Ascending aorta (tissue), 2 donors: ENCODE measurements at regions of chr6 and their contacts with region 1.

Region 1: GRCh38 chr6:169035385-169036240 is 218.0 kb downstream of the THBS2 start:
- DNase-seq: no peak
- H3K4me3 ChIP-seq: peak overlapping the region in 1 of 2 donors; percentile 52
- H3K27ac ChIP-seq: peak overlapping the region; percentile 53 to 76
- H3K4me1 ChIP-seq: peaks cover 0 to under 1% of the 10 kb centered on the region in 2 donors
- H3K27me3 ChIP-seq: no peaks in the 10 kb centered on the region
- CTCF ChIP-seq: no peak

Region 2: GRCh38 chr6:168884646-168885086 is 150.9 kb before region 1 on chr6:
- intact Hi-C with region 1: no loop called
- DNase-seq: peak in 1 of 2 donors; percentile 84
- H3K4me3 ChIP-seq: peak overlapping the region; percentile 42 to 53
- H3K27ac ChIP-seq: no peak overlapping the region
- H3K4me1 ChIP-seq: no peaks in the 10 kb centered on the region
- H3K27me3 ChIP-seq: no peaks in the 10 kb centered on the region
- CTCF ChIP-seq: peak; percentile 93 to 99 (median 94)

Region 3: GRCh38 chr6:169079650-169080049 is 44.0 kb after region 1 on chr6:
- intact Hi-C with region 1: loop called (anchors 5 kb)
- DNase-seq: no peak
- H3K4me3 ChIP-seq: no peak overlapping the region
- H3K27ac ChIP-seq: no peak overlapping the region
- H3K4me1 ChIP-seq: peaks cover 0 to 9% of the 10 kb centered on the region in 2 donors
- H3K27me3 ChIP-seq: no peaks in the 10 kb centered on the region
- CTCF ChIP-seq: no peak